ENCODE measurements at regions of chr2 and their contacts with region 1.

Region 1: DNA sequence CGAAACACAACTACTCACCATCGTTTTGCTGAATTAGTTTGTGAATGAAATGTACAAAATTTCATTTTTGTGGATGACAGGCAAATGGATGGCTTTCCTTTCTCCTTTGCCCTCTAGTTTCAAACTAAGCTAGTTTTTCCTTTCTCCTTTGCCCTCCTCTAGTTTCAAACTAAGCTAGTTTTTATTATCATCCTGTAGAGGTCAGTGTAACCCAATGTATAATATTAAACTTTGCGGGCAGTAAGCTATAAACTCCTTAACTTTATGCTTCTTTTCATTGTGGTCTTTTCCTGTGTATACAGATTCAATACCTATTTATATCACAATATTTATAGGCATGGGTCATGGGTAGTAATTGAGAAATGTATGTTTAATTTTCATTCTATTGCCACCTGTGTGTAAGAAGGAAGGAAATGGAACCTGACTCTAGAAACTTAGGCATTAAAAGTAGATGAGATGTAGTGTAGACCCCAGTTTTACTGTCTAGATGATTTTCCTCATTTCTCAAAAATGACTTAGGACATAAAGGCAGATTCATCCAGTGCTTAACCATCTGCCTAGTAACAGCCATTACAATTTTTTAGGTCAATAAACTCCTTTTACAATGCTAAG is 58.1 kb downstream of the MAP3K19 start:
- DNase-seq: peak; percentile 50
- ATAC-seq: peak; percentile 84
- H3K4me3 ChIP-seq: no peak overlapping the region
- H3K27ac ChIP-seq: no peak overlapping the region
- H3K4me1 ChIP-seq: no peaks in the 10 kb centered on the region
- H3K27me3 ChIP-seq: peaks cover 10% of the 10 kb centered on the region
- CTCF ChIP-seq: peak; percentile 56
- POLR2A ChIP-seq: no peak
- RAD21 ChIP-seq: peak; percentile 50

Region 2: GRCh38 chr2:134819334-134819733 is 169.8 kb before region 1 on chr2:
- CTCF ChIA-PET with region 1: no interaction called
- POLR2A ChIA-PET with region 1: no interaction called
- dilution Hi-C with region 1: no loop called
- in situ Hi-C with region 1: no loop called
- intact Hi-C with region 1: no loop called
- DNase-seq: peak; percentile 74
- ATAC-seq: no peak
- H3K4me3 ChIP-seq: no peak overlapping the region
- H3K27ac ChIP-seq: no peak overlapping the region
- H3K4me1 ChIP-seq: no peaks in the 10 kb centered on the region
- H3K27me3 ChIP-seq: no peaks in the 10 kb centered on the region
- CTCF ChIP-seq: no peak
- POLR2A ChIP-seq: no peak
- RAD21 ChIP-seq: no peak

Region 3: GRCh38 chr2:135797497-135798274 is 808.6 kb after region 1 on chr2:
- CTCF ChIA-PET with region 1: interaction called, 4 read pairs
- POLR2A ChIA-PET with region 1: no interaction called
- dilution Hi-C with region 1: no loop called
- in situ Hi-C with region 1: no loop called
- intact Hi-C with region 1: loop called (anchors 5 kb)
- DNase-seq: peak; percentile 79
- ATAC-seq: peak; percentile 98
- H3K4me3 ChIP-seq: no peak overlapping the region
- H3K27ac ChIP-seq: no peak overlapping the region
- H3K4me1 ChIP-seq: no peaks in the 10 kb centered on the region
- H3K27me3 ChIP-seq: no peaks in the 10 kb centered on the region
- CTCF ChIP-seq: peak; percentile 93
- POLR2A ChIP-seq: no peak
- RAD21 ChIP-seq: peak; percentile 62

Region 4: DNA sequence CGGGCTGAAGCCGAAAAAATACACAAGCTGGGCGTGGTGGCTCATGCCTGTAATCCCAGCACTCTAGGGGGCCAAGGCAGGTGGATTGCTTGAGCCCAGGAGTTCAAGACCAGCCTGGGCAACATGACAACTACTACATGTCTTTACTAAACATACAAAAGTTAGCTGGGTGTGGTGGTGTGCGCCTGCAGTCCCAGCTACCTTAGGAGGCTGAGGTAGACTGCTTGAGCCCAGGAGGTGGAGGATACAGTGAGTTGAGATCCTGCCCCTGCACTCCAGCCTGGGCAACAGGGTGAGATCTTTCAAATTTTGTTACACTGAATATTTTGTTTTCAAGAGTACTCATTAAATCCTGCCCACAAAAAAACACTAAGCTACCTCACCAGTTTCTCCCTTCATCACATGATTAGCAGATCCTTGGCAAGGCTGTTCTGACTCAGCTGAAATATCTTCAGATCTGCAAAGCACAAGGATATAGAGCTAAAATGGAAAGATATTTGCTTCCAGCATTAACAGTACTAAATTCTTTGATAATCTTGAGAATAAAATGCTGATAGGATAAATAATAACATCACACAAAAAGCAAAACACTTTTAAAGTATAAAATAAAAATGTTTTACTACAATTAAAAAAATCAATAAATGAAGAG is 915.4 kb after region 1 on chr2:
- CTCF ChIA-PET with region 1: interaction called, 3 read pairs
- POLR2A ChIA-PET with region 1: no interaction called
- dilution Hi-C with region 1: no loop called
- in situ Hi-C with region 1: no loop called
- intact Hi-C with region 1: loop called (anchors 10 kb)
- DNase-seq: peak; percentile 64
- ATAC-seq: peak; percentile 53
- H3K4me3 ChIP-seq: no peak overlapping the region
- H3K27ac ChIP-seq: no peak overlapping the region
- H3K4me1 ChIP-seq: no peaks in the 10 kb centered on the region
- H3K27me3 ChIP-seq: no peaks in the 10 kb centered on the region
- CTCF ChIP-seq: no peak
- POLR2A ChIP-seq: no peak
- RAD21 ChIP-seq: no peak

Region 5: DNA sequence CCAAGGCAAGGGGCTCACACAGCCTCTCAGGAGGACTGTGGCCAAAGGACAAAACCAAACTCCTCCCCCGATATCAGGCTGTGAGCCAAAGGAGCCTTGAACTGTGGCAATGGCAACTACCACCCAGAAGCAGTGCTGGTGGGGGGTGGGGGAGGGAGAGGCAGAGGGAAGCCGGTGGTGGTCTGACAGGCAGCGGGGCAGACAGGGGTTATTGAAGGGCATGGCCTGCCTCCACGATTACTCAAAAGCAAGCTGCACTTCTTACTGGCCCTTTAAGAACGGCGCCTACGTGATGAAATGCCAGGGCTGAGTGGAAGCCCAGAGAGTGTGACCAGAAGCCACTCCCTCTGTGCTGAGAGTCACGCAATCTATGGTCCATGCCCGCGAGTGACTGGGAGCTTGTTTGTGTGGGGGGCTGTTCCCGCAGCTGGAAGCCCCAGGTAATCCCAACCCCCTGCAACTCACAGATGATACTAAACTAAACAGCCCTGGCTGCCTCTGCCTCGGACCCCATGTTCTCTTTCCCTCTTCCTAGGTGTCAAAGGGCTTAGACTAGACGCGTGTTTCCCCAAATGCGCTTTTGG is 1257.1 kb after region 1 on chr2:
- CTCF ChIA-PET with region 1: no interaction called
- POLR2A ChIA-PET with region 1: no interaction called
- dilution Hi-C with region 1: no loop called
- in situ Hi-C with region 1: no loop called
- intact Hi-C with region 1: no loop called
- DNase-seq: peak; percentile 4
- ATAC-seq: no peak; the same call in 1 of the 2 replicates
- H3K4me3 ChIP-seq: no peak overlapping the region
- H3K27ac ChIP-seq: no peak overlapping the region
- H3K4me1 ChIP-seq: no peaks in the 10 kb centered on the region
- H3K27me3 ChIP-seq: no peaks in the 10 kb centered on the region
- CTCF ChIP-seq: no peak
- POLR2A ChIP-seq: no peak
- RAD21 ChIP-seq: no peak

Region 6: GRCh38 chr2:136384531-136385303 is 1395.6 kb after region 1 on chr2:
- CTCF ChIA-PET with region 1: no interaction called
- POLR2A ChIA-PET with region 1: no interaction called
- dilution Hi-C with region 1: no loop called
- in situ Hi-C with region 1: loop called (anchors 25 kb)
- intact Hi-C with region 1: loop called (anchors 5 kb)
- DNase-seq: peak; percentile 5
- ATAC-seq: peak; percentile 63
- H3K4me3 ChIP-seq: no peak overlapping the region
- H3K27ac ChIP-seq: no peak overlapping the region
- H3K4me1 ChIP-seq: no peaks in the 10 kb centered on the region
- H3K27me3 ChIP-seq: no peaks in the 10 kb centered on the region
- CTCF ChIP-seq: peak; percentile 35
- POLR2A ChIP-seq: no peak
- RAD21 ChIP-seq: peak; percentile 54

Measured in IMR-90 (cell line).